Mammary epithelial cell (primary cell): ENCODE measurements at regions of chrX and their contacts with region 1.

Region 1: GRCh38 chrX:47751670-47752069 is 85.0 kb upstream of the ZNF81 start:
- DNase-seq: peak; percentile 26
- H3K4me3 ChIP-seq: no peak overlapping the region
- H3K27ac ChIP-seq: no peak overlapping the region
- H3K4me1 ChIP-seq: no peaks in the 10 kb centered on the region
- H3K27me3 ChIP-seq: peaks cover 2% of the 10 kb centered on the region
- CTCF ChIP-seq: peak; percentile 48 to 75

Region 2: GRCh38 chrX:47540754-47541538 is 210.7 kb before region 1 on chrX:
- CTCF ChIA-PET with region 1: no interaction called
- dilution Hi-C with region 1: no loop called
- in situ Hi-C with region 1: no loop called
- intact Hi-C with region 1: loop called (anchors 1 kb)
- DNase-seq: peak; percentile 80
- H3K4me3 ChIP-seq: no peak overlapping the region
- H3K27ac ChIP-seq: peak overlapping the region; percentile 3
- H3K4me1 ChIP-seq: no peaks in the 10 kb centered on the region
- H3K27me3 ChIP-seq: no peaks in the 10 kb centered on the region
- CTCF ChIP-seq: peak; percentile 42 to 67

Region 3: GRCh38 chrX:47650164-47651042 is 101.3 kb before region 1 on chrX and contains the start of gene ELK1:
- CTCF ChIA-PET with region 1: no interaction called
- dilution Hi-C with region 1: no loop called
- in situ Hi-C with region 1: loop called in 1 of 2 experiments (anchors 10 kb)
- intact Hi-C with region 1: loop called (anchors 1 kb)
- DNase-seq: peak; percentile 97
- H3K4me3 ChIP-seq: peak within 1 kb of the TSS; percentile 52 to 77 (median 68)
- H3K27ac ChIP-seq: peak within 1 kb of the TSS; percentile 36
- H3K4me1 ChIP-seq: peaks cover 14% of the 10 kb centered on the region
- H3K27me3 ChIP-seq: no peaks in the 10 kb centered on the region
- CTCF ChIP-seq: no peak
- total RNA-seq, gene ELK1: 17.2 to 44.7 TPM

Region 4: GRCh38 chrX:47836164-47837072 is 84.7 kb after region 1 on chrX and contains the start of gene ZNF81:
- CTCF ChIA-PET with region 1: no interaction called
- dilution Hi-C with region 1: no loop called
- in situ Hi-C with region 1: no loop called
- intact Hi-C with region 1: loop called (anchors 10 kb)
- DNase-seq: peak; percentile 94
- H3K4me3 ChIP-seq: peak within 1 kb of the TSS; percentile 55 to 59 (median 56)
- H3K27ac ChIP-seq: peak within 1 kb of the TSS; percentile 59
- H3K4me1 ChIP-seq: no peaks in the 10 kb centered on the region
- H3K27me3 ChIP-seq: no peaks in the 10 kb centered on the region
- CTCF ChIP-seq: no peak
- total RNA-seq, gene ZNF81: 6.1 to 7.8 TPM